ENCODE measurements at regions of chr15 and their contacts with region 1.

Region 1: DNA sequence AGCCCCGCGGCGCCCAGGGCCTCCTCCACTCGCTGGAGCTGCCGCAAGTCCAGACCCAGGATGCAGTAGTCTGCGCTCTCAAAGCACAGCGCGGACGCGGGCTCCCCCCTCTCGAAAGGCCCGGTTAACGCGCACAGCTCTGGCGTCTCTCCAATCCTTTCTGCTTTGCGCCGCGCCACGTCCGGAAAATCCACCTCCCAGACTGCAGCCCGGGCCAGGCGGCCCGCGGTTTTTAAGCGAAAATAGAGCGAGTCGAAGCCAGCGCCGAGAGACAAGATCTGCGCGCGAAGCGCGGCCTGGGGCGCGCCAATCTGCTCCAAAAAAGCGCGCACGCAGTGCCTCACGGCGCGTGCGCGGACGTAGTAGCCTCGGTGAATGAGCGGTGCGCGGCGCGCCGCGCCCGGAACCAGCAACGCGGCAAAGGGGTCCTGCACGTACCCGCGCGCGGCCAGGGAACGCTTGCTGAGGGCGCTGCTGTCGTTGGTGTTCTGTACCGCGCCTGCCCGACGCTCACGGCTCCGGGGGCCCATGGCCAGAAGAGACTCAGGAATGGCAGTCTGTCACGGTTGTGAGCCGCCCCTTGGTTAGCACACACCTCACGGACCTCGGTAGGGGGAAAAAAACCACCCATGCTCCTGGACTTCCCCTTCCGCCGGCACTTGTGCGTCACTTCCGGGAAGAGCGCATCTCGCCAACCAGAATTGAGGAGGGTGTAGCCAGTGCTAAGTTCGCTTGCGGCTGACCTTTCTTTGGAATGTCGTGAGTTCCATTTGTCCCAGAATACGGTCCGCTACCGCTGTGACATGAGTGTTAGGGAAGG is at the start of gene LCMT2:
- DNase-seq: peak; percentile 84 to 94 (median 91)
- H3K4me3 ChIP-seq: peak within 1 kb of the TSS; percentile 61 to 96 (median 84)
- H3K27ac ChIP-seq: peak within 1 kb of the TSS; percentile 51 to 98 (median 91)
- H3K27me3 ChIP-seq: no peaks in the 10 kb centered on the region
- CTCF ChIP-seq: peak in 25 of 56 donors; percentile 6 to 42 (median 21)
- total RNA-seq, gene LCMT2: 2.2 to 10.9 (median 7.0) TPM

Region 2: DNA sequence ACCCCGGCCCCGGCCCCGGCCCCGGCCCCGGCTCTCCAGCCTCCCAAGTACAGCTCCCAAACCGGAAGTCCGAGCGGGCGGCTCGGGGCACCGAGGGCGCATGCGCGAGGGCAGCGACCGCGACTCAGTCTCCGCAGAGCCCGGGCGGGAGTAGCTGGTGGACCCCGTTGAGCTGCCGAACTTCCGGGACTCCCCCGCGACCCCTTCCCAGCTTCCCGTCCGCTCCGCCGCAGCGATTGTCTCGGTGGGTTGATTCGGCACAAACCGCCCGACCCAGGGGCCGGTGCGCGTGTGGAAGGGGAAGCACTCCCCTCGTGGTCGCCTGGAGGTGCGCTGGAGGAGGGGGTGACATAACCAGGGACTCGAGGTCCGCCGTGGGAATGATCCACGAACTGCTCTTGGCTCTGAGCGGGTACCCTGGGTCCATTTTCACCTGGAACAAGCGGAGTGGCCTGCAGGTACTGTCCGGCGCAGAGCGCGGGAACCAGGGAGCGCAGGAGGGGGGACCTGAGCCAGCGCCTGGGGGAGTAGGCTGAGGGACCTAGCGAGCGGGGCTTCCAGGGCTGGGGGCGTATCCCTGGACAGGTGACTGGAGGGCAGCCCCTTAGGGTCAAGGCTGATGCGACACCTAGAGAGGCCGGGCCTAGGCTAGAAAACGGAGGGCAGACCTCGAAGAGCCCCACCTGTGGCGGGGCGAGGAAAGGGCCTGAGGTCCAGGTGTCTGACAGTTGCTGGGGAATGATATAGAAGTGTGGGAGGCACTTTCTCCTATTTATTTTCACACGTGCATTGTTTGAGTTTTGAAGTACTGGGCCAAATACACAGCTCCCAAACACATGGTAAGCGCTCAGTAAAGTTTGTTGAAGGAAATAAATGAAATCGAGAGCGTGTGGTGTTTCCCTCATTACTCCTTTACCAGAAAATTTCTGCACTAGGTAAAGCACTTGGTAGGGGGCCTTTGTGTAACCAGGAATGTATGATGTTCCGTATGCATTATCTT is 41.1 kb after region 1 on chr15 and contains the starts of genes TUBGCP4 and ZSCAN29:
- intact Hi-C with region 1: loop called in 1 of 2 experiments (anchors 5 kb)
- DNase-seq: peak; percentile 64 to 91 (median 70)
- H3K4me3 ChIP-seq: peak within 1 kb of the TSS; percentile 54 to 99 (median 92)
- H3K27ac ChIP-seq: peak within 1 kb of the TSS in 52 of 59 donors; percentile 0 to 93 (median 71)
- H3K27me3 ChIP-seq: no peaks in the 10 kb centered on the region
- CTCF ChIP-seq: peak in 24 of 56 donors; percentile 5 to 48 (median 16)
- total RNA-seq, gene TUBGCP4: 19.0 to 42.6 (median 29.7) TPM
- total RNA-seq, gene ZSCAN29: 16.1 to 41.9 (median 26.0) TPM

Measured in dorsolateral prefrontal cortex (tissue), 120 donors.